ENCODE measurements at regions of chr1 and their contacts with region 1.

Region 1: GRCh38 chr1:11907275-11908094 is 18.7 kb downstream of the KIAA2013 start:
- DNase-seq: peak; percentile 95
- H3K4me3 Mint-ChIP-seq: peak overlapping the region; percentile 92
- H3K27ac Mint-ChIP-seq: peak overlapping the region; percentile 99
- H3K4me1 Mint-ChIP-seq: peaks cover 37% of the 10 kb centered on the region
- H3K27me3 Mint-ChIP-seq: peaks cover 16% of the 10 kb centered on the region

Region 2: GRCh38 chr1:11681071-11681771 is 226.3 kb before region 1 on chr1 and contains the start of gene MAD2L2:
- CTCF ChIA-PET with region 1: no interaction called
- POLR2A ChIA-PET with region 1: interaction called, 18 read pairs
- intact Hi-C with region 1: no loop called
- DNase-seq: peak; percentile 92
- H3K4me3 Mint-ChIP-seq: peak within 1 kb of the TSS; percentile 86
- H3K27ac Mint-ChIP-seq: peak within 1 kb of the TSS; percentile 92
- H3K4me1 Mint-ChIP-seq: peaks cover 11% of the 10 kb centered on the region
- H3K27me3 Mint-ChIP-seq: peaks cover 2% of the 10 kb centered on the region
- total RNA-seq, gene MAD2L2: 88.5 to 93.2 TPM

Region 3: GRCh38 chr1:11893907-11894251 is 13.6 kb before region 1 on chr1:
- CTCF ChIA-PET with region 1: interaction called, 3 read pairs
- POLR2A ChIA-PET with region 1: interaction called, 12 read pairs
- intact Hi-C with region 1: no loop called
- DNase-seq: peak; percentile 78
- H3K4me3 Mint-ChIP-seq: peak overlapping the region; percentile 41
- H3K27ac Mint-ChIP-seq: peak overlapping the region; percentile 33
- H3K4me1 Mint-ChIP-seq: no peaks in the 10 kb centered on the region
- H3K27me3 Mint-ChIP-seq: peaks cover 22% of the 10 kb centered on the region

Region 4: DNA sequence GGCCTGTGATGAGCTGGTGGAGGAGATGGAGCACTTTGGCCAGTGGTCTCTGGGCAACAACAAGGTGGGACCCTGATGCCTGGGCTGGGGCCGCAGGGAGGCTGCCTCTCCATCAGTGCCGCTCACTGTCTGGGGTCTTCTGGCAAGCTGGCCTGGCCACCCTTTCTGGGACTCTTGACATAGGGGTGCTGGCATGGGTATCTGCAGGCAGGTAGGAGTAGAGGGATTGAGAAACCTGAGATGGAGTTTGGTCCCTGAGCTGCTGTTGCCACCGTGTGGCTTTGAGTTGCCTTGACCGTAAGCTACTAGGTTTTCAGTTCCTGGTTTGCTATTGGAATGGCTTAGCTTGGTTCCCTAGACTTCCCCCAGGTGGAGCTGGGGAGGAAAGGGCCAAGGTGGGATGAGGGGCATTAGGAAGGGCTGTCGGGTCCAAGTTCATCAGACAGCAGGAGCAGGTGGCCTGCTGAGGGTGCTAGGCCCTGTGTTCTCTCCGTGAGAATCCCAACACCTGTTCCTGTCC is 59.6 kb after region 1 on chr1:
- CTCF ChIA-PET with region 1: no interaction called
- POLR2A ChIA-PET with region 1: interaction called, 11 read pairs
- intact Hi-C with region 1: no loop called
- DNase-seq: no peak
- H3K4me3 Mint-ChIP-seq: no peak overlapping the region
- H3K27ac Mint-ChIP-seq: no peak overlapping the region
- H3K4me1 Mint-ChIP-seq: no peaks in the 10 kb centered on the region
- H3K27me3 Mint-ChIP-seq: no peaks in the 10 kb centered on the region

Region 5: DNA sequence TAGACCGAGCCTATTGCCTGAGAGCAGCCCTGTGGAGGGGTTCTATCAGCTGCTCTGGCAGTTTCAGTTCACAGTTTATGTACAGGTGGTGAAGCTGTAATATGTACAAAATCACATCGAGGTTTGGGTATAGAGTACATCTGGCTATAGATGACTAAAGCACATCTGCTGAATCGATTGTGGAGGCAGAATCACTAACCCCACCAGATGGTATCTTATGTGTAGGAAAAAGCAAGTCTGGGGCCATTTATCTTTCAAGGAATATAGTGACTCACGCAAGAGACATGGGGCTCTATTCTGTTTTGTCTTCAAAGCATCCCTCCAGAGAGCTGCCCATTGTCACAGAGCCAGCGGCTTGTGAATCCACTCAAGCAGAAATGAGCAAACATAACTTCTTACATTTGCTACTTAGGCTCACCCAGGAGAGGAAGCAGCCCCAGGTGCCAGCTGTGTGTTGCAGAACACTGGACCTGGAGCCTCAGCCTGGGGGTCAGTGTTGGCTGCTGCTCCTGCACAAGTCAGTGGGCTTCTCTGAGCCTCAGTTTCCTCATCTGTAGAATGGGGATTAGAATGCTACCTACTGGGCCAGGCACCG is 133.1 kb after region 1 on chr1:
- CTCF ChIA-PET with region 1: no interaction called
- POLR2A ChIA-PET with region 1: interaction called, 49 read pairs
- intact Hi-C with region 1: loop called (anchors 10 kb)
- DNase-seq: peak; percentile 66
- H3K4me3 Mint-ChIP-seq: no peak overlapping the region
- H3K27ac Mint-ChIP-seq: peak overlapping the region; percentile 46
- H3K4me1 Mint-ChIP-seq: peaks cover 43% of the 10 kb centered on the region
- H3K27me3 Mint-ChIP-seq: peaks cover 3% of the 10 kb centered on the region

Region 6: GRCh38 chr1:12078938-12079861 is 171.7 kb after region 1 on chr1:
- CTCF ChIA-PET with region 1: interaction called, 3 read pairs
- POLR2A ChIA-PET with region 1: interaction called, 17 read pairs
- intact Hi-C with region 1: no loop called
- DNase-seq: peak; percentile 74
- H3K4me3 Mint-ChIP-seq: peak overlapping the region; percentile 44
- H3K27ac Mint-ChIP-seq: peak overlapping the region; percentile 70
- H3K4me1 Mint-ChIP-seq: peaks cover 33% of the 10 kb centered on the region
- H3K27me3 Mint-ChIP-seq: peaks cover 5% of the 10 kb centered on the region